Vagina (tissue), 2 donors: ENCODE measurements at regions of chr1 and their contacts with region 1.

Region 1: DNA sequence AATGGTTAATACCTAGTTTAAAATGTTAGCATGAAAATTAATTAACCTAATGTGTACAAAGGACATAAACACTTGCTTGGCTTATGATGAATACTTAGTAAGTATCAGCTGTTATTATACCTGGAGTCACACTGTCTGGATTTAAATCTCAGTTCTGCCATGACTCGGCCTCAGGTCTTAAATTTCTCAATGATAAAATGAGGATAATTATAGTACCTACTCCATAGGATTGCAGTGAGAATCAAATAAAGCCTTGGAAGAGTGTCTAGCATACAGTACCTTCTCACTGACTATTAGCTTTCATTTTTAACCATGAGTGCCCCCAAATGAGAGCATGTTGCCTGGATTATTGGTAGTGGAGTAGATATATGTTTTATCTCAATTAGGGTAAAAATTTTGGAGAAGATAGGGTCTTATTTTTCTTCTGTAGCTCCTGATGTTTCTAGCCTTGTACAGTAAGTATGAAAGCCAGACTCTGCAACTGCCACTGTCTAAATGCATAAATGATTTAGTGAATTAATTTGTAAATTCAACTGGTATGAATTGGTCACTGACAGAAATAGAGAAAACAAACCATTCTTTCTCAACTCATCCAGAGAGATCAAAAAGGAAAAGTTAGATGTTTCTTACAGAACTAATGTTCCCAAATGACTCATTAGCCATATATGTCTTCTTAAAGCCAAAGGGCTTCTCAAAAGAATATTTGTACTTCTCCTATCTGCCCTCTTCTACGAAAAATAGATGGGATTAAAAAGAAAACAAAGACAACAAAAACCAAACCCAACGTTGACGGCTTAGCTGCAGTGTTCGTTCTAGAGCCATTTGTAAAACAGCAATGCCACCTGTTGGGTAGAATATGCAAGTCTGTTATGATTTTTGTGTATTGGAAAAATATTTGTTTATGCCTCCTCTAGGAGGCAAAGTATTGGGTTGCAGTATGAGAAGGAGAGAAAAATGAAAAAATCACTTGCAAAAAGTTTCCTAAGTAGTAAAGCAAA is 53.8 kb upstream of the MROH9 start:
- DNase-seq: no peak
- H3K4me3 ChIP-seq: no peak overlapping the region
- H3K27ac ChIP-seq: peak overlapping the region; percentile 26
- H3K4me1 ChIP-seq: no peaks in the 10 kb centered on the region
- H3K27me3 ChIP-seq: no peaks in the 10 kb centered on the region
- CTCF ChIP-seq: peak; percentile 9 to 59 (median 35)
- POLR2A ChIP-seq: no peak

Region 2: DNA sequence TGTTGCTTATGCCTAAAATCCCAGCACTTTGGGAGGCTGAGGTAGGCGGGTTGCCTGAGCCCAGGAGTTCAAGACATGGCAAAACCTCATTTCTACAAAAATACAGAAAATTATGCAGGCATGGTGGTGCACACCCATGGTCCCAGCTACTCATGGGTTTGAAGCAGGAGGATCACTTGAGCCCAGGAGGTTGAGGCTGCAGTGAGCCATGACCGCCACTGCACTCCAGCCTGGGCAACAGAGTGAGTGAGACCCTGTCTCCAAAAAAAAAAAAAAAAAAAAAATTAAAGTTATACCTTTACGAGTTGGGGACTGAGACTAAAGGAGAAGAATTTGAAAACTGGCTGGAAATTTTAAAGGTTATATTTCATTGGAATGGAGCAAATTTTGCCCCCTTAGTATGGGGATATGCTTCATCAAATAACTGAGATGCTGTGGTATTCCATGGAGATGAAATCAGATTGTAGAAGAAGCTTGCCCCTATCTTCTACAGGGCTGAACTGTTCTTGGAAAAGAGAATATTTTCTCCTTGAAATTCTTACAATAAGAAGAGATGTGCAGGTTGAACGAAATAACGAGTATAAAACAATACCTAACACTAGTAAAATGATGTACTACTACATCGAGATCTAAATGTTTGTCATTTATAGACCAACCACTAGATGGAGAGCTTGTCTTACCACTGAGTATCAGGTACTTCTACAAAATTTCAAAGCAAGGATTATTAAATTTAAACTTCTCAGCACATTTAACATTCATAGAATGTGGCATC is 952.9 kb before region 1 on chr1:
- intact Hi-C with region 1: loop called (anchors 10 kb)
- DNase-seq: no peak
- H3K4me3 ChIP-seq: no peak overlapping the region
- H3K27ac ChIP-seq: no peak overlapping the region
- H3K4me1 ChIP-seq: peaks cover 9% of the 10 kb centered on the region
- H3K27me3 ChIP-seq: no peaks in the 10 kb centered on the region
- CTCF ChIP-seq: peak; percentile 38 to 71 (median 51)
- POLR2A ChIP-seq: no peak

Region 3: DNA sequence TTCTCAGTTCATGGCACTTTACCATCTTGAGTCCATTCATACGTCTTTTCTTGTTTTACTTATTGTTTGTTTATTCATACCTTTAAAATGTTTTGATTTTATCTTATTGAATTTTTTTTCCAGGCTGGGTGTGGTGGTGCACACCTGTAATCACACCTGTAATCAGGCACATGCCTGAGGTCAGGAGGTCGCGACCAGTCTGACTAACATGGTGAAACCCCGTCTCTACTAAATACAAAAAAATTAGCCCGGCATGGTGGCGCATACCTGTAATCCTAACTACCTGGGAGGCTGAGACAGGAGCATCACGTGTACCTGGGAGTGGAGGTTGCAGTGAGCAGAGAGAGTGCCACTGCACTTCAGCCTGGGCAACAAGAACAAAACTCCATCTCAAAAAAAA is 50.3 kb before region 1 on chr1:
- intact Hi-C with region 1: no loop called
- DNase-seq: no peak
- H3K4me3 ChIP-seq: no peak overlapping the region
- H3K27ac ChIP-seq: no peak overlapping the region
- H3K4me1 ChIP-seq: no peaks in the 10 kb centered on the region
- H3K27me3 ChIP-seq: no peaks in the 10 kb centered on the region
- CTCF ChIP-seq: no peak
- POLR2A ChIP-seq: no peak